ENCODE measurements at regions of chr7 and their contacts with region 1.

Region 1: GRCh38 chr7:30412810-30413504 is 65.6 kb downstream of the NOD1 start:
- DNase-seq: peak; percentile 56
- H3K4me3 ChIP-seq: no peak overlapping the region
- H3K27ac ChIP-seq: no peak overlapping the region
- H3K4me1 ChIP-seq: no peaks in the 10 kb centered on the region
- H3K27me3 ChIP-seq: no peaks in the 10 kb centered on the region
- CTCF ChIP-seq: peak; percentile 37 to 62 (median 57)
- POLR2A ChIP-seq: no peak

Region 2: DNA sequence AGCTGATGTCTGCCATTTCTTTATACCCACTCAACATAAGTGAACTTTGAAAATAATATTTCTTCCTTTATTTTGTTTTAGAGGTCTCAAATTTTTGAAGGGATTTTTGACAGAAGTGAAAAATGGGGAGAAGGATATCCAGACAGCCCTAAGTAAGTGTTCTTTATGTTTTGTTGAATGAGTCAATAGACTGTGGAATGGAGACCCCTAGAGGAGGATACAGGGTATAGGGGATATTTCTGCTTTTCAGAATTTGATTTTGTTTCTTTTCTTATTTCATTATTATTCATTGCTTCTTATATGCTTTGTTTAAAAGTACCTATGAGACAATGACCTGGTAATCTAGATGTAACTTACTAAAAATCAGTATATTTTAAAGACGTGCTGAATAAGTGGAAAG is 350.4 kb before region 1 on chr7:
- intact Hi-C with region 1: no loop called
- DNase-seq: no peak
- H3K4me3 ChIP-seq: no peak overlapping the region
- H3K27ac ChIP-seq: no peak overlapping the region
- H3K4me1 ChIP-seq: no peaks in the 10 kb centered on the region
- H3K27me3 ChIP-seq: no peaks in the 10 kb centered on the region
- CTCF ChIP-seq: peak; percentile 43 to 61 (median 53)
- POLR2A ChIP-seq: no peak

Region 3: DNA sequence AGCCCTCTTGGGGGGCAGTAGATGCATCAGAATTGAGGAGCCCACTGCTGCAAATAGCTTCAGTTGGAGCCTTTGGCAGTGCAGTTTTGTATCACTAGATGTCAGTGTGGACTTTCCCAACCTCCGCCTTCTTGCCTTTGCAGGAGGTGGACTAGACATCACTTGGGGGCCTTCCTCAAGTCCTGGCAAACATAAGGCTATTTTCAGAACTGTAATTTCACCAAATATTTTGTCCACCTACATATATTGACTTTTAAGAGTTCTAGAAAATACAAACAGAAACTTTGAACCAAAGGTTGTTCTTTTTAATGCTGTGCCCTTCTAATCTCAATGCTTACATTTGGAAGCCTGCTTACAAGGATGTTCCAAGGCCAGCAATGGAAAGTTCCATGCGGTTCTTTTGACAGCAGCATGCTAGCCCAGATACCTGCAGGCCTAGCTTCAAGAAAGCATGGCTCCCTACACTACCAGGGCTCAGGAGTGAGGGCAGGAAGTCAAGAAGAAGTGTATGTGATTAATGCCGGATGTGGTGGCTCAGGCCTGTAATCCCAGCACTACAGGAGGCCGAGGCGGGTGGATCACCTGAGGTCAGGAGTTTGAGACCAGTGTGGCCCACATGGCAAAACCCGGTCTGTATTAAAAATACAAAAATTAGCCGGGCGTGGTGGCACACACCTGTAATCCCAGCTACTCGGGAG is 136.6 kb before region 1 on chr7:
- intact Hi-C with region 1: loop called (anchors 5 kb)
- DNase-seq: peak; percentile 60
- H3K4me3 ChIP-seq: no peak overlapping the region
- H3K27ac ChIP-seq: no peak overlapping the region
- H3K4me1 ChIP-seq: no peaks in the 10 kb centered on the region
- H3K27me3 ChIP-seq: no peaks in the 10 kb centered on the region
- CTCF ChIP-seq: peak in 2 of 3 experiments; percentile 32 to 54
- POLR2A ChIP-seq: no peak

Region 4: DNA sequence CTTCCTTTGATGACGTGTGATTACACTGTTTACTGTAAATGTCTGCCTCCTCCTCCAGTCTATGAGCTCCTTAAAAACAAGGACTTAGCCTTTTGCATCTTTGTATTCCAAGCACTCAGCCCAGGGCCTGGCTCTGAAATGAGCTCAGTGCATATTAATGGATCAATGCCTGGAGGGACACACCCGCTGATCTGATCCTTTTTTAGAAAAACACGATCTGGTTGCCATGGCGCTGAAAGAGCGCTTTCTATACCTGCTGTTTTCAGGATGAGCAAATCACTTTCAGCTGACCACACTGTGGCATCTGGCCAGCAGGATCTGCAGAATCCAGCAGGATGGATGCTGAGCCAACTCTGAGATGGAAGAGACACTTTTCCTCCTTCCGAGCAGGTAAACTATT is 143.9 kb after region 1 on chr7:
- intact Hi-C with region 1: no loop called
- DNase-seq: no peak
- H3K4me3 ChIP-seq: no peak overlapping the region
- H3K27ac ChIP-seq: no peak overlapping the region
- H3K4me1 ChIP-seq: no peaks in the 10 kb centered on the region
- H3K27me3 ChIP-seq: no peaks in the 10 kb centered on the region
- CTCF ChIP-seq: no peak
- POLR2A ChIP-seq: no peak

Measured in testis (tissue), 5 donors.